ENCODE measurements at regions of chr5 and their contacts with region 1.

Region 1: GRCh38 chr5:40652441-40653220 is 27.1 kb upstream of the PTGER4 start:
- DNase-seq: peak in 3 of 9 donors; percentile 25 to 37 (median 27)
- ATAC-seq: peak; percentile 50
- H3K4me3 ChIP-seq: peak overlapping the region; percentile 15
- H3K4me3 Mint-ChIP-seq: peak overlapping the region; percentile 39 to 88 (median 82)
- H3K27ac ChIP-seq: peak overlapping the region; percentile 74
- H3K27ac Mint-ChIP-seq: peak overlapping the region; percentile 89 to 96 (median 94)
- H3K4me1 ChIP-seq: peaks cover 48 to 54% of the 10 kb centered on the region in 2 donors
- H3K4me1 Mint-ChIP-seq: peaks cover 63 to 83% (median 78%) of the 10 kb centered on the region in 7 donors
- H3K27me3 ChIP-seq: no peaks in the 10 kb centered on the region
- H3K27me3 Mint-ChIP-seq: no peaks in the 10 kb centered on the region

Region 2: GRCh38 chr5:40046792-40047191 is 605.8 kb before region 1 on chr5:
- CTCF ChIA-PET with region 1: no interaction called
- POLR2A ChIA-PET with region 1: no interaction called
- intact Hi-C with region 1: no loop called
- DNase-seq: no peak
- ATAC-seq: no peak
- H3K4me3 ChIP-seq: no peak overlapping the region
- H3K4me3 Mint-ChIP-seq: no peak overlapping the region
- H3K27ac ChIP-seq: no peak overlapping the region
- H3K27ac Mint-ChIP-seq: no peak overlapping the region
- H3K4me1 ChIP-seq: no peaks in the 10 kb centered on the region
- H3K4me1 Mint-ChIP-seq: peaks cover 0 to 4% (median 0%) of the 10 kb centered on the region in 7 donors
- H3K27me3 ChIP-seq: no peaks in the 10 kb centered on the region
- H3K27me3 Mint-ChIP-seq: peaks cover 0 to 6% (median 3%) of the 10 kb centered on the region in 5 donors

Region 3: GRCh38 chr5:40367255-40367654 is 285.4 kb before region 1 on chr5:
- CTCF ChIA-PET with region 1: no interaction called
- POLR2A ChIA-PET with region 1: no interaction called
- intact Hi-C with region 1: loop called in 1 of 2 experiments (anchors 1 kb)
- DNase-seq: peak in 7 of 9 donors; percentile 18 to 53 (median 38)
- ATAC-seq: peak; percentile 54
- H3K4me3 ChIP-seq: no peak overlapping the region
- H3K4me3 Mint-ChIP-seq: no peak overlapping the region
- H3K27ac ChIP-seq: no peak overlapping the region
- H3K27ac Mint-ChIP-seq: peak overlapping the region in 6 of 9 donors; percentile 19 to 86 (median 66)
- H3K4me1 ChIP-seq: peaks cover 0 to under 1% of the 10 kb centered on the region in 2 donors
- H3K4me1 Mint-ChIP-seq: peaks cover 0 to 17% (median 8%) of the 10 kb centered on the region in 7 donors
- H3K27me3 ChIP-seq: no peaks in the 10 kb centered on the region
- H3K27me3 Mint-ChIP-seq: no peaks in the 10 kb centered on the region

Region 4: GRCh38 chr5:40578501-40579451 is 73.9 kb before region 1 on chr5:
- CTCF ChIA-PET with region 1: no interaction called
- POLR2A ChIA-PET with region 1: no interaction called
- intact Hi-C with region 1: loop called in 1 of 2 experiments (anchors 5 kb)
- DNase-seq: peak in 4 of 9 donors; percentile 7 to 45 (median 8)
- ATAC-seq: peak; percentile 45
- H3K4me3 ChIP-seq: no peak overlapping the region
- H3K4me3 Mint-ChIP-seq: peak overlapping the region in 9 of 10 donors; percentile 61 to 83 (median 79)
- H3K27ac ChIP-seq: peak overlapping the region; percentile 11
- H3K27ac Mint-ChIP-seq: peak overlapping the region; percentile 6 to 85 (median 73)
- H3K4me1 ChIP-seq: no peaks in the 10 kb centered on the region
- H3K4me1 Mint-ChIP-seq: peaks cover 14 to 35% (median 24%) of the 10 kb centered on the region in 7 donors
- H3K27me3 ChIP-seq: no peaks in the 10 kb centered on the region
- H3K27me3 Mint-ChIP-seq: no peaks in the 10 kb centered on the region

Region 5: DNA sequence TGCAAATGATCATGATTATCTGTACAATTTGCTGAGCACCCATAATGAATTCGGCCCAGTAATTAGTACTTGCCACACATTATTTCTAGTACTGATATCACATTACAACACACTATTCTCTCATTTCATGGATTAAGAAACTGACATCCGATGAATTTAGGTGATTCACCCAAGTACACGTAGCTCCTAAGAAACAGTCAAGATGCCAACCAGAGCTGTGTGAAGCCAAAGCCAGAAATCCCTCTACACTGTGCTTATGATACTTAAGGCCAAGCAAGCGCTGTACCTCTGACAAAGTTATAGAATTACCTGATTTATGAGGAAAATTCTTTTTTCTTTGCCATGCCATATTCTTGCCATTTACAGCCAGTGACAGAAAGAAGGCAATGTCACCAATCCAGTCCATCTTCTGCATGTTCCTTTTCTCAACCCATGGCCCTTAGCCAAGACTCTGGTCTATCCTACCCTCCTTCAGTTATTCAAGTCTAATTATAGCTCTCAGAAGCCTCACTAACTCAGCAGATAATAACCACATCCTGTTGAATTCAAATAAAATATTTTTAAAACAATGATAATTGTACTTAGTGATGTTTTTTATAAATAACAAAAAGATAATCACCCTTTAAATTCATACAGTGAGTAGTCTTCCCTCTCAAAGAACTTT is 47.2 kb before region 1 on chr5:
- CTCF ChIA-PET with region 1: no interaction called
- POLR2A ChIA-PET with region 1: no interaction called
- intact Hi-C with region 1: loop called in 1 of 2 experiments (anchors 5 kb)
- DNase-seq: peak in 5 of 9 donors; percentile 15 to 46 (median 33)
- ATAC-seq: peak; percentile 63
- H3K4me3 ChIP-seq: no peak overlapping the region
- H3K4me3 Mint-ChIP-seq: peak overlapping the region in 6 of 10 donors; percentile 47 to 80 (median 68)
- H3K27ac ChIP-seq: no peak overlapping the region
- H3K27ac Mint-ChIP-seq: peak overlapping the region in 5 of 9 donors; percentile 11 to 57 (median 32)
- H3K4me1 ChIP-seq: peaks cover 15 to 17% of the 10 kb centered on the region in 2 donors
- H3K4me1 Mint-ChIP-seq: peaks cover 23 to 39% (median 32%) of the 10 kb centered on the region in 7 donors
- H3K27me3 ChIP-seq: no peaks in the 10 kb centered on the region
- H3K27me3 Mint-ChIP-seq: no peaks in the 10 kb centered on the region

Region 6: GRCh38 chr5:40623480-40624420 is 28.9 kb before region 1 on chr5:
- CTCF ChIA-PET with region 1: no interaction called
- POLR2A ChIA-PET with region 1: interaction called, 5 read pairs
- intact Hi-C with region 1: loop called (anchors 1 to 2 kb)
- DNase-seq: peak in 7 of 9 donors; percentile 49 to 78 (median 68)
- ATAC-seq: peak; percentile 90
- H3K4me3 ChIP-seq: no peak overlapping the region
- H3K4me3 Mint-ChIP-seq: peak overlapping the region; percentile 13 to 73 (median 46)
- H3K27ac ChIP-seq: peak overlapping the region; percentile 50
- H3K27ac Mint-ChIP-seq: peak overlapping the region; percentile 60 to 94 (median 83)
- H3K4me1 ChIP-seq: peaks cover 23 to 25% of the 10 kb centered on the region in 2 donors
- H3K4me1 Mint-ChIP-seq: peaks cover 23 to 68% (median 55%) of the 10 kb centered on the region in 7 donors
- H3K27me3 ChIP-seq: no peaks in the 10 kb centered on the region
- H3K27me3 Mint-ChIP-seq: no peaks in the 10 kb centered on the region

Region 7: DNA sequence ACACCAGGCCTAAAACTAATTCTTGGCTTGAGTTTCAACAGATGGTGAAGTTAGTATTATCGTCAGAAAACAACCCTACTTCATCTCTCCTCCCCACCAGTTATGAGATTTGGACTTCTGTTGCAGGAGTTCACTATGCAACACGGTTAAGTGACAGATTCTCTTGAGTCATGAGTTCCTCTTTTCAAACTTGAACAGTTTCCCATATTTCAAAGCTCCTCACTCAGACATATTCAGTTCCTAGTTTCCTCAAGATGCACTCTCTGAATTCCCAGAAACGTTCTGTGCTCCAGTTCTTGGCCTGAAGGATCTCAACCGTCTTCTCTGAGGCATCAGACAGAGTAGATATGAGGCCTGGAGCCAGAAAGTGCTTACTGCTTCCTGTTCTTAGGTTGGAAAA is 19.8 kb after region 1 on chr5:
- CTCF ChIA-PET with region 1: interaction called, 6 read pairs
- POLR2A ChIA-PET with region 1: interaction called, 23 read pairs
- intact Hi-C with region 1: loop called in 1 of 2 experiments (anchors 1 kb)
- DNase-seq: no peak
- ATAC-seq: peak; percentile 59
- H3K4me3 ChIP-seq: no peak overlapping the region
- H3K4me3 Mint-ChIP-seq: peak overlapping the region in 7 of 10 donors; percentile 1 to 49 (median 30)
- H3K27ac ChIP-seq: peak overlapping the region; percentile 48
- H3K27ac Mint-ChIP-seq: peak overlapping the region; percentile 74 to 91 (median 87)
- H3K4me1 ChIP-seq: peaks cover 29 to 71% of the 10 kb centered on the region in 2 donors
- H3K4me1 Mint-ChIP-seq: peaks cover 50 to 89% (median 87%) of the 10 kb centered on the region in 7 donors
- H3K27me3 ChIP-seq: no peaks in the 10 kb centered on the region
- H3K27me3 Mint-ChIP-seq: no peaks in the 10 kb centered on the region

Measured in naive thymus-derived CD4-positive, alpha-beta T cell (primary cell).